Vagina (tissue), 2 donors: ENCODE measurements at regions of chr10 and their contacts with region 1.

Region 1: DNA sequence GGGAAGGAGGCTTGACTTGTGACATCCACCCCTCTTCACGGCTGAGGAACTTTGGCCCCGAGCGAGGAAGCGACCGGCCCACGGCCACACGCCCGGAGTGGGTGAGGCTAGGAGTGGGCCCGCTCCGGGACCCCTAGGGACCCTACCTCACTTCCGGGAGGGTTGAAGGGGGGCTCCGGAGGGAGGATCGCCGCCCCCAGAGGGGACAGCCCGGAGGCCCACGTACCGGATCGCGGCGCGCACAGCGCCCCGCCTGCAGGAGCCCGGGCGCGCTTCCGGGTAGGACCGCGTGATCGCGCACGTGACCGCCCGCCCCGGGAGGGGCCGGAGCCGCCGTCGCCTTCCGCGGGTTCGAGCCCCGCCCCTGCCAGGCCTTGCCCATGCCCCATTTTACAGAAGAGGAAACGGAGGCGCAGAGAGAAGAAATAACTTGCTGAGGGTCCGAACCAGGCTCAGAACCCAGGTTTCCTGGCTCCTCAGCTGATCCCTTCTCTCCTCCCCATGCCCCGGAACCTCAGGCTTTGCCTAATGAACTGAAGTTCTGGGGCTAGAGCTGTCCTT is at the start of gene HPS1:
- DNase-seq: no peak
- H3K4me3 ChIP-seq: peak within 1 kb of the TSS; percentile 62 to 65
- H3K27ac ChIP-seq: peak within 1 kb of the TSS; percentile 92
- H3K4me1 ChIP-seq: peaks cover 8% of the 10 kb centered on the region
- H3K27me3 ChIP-seq: no peaks in the 10 kb centered on the region
- CTCF ChIP-seq: no peak
- POLR2A ChIP-seq: peak in 1 of 2 donors; percentile 88
- total RNA-seq, gene HPS1: 62.1 TPM

Region 2: GRCh38 chr10:97759158-97759887 is 687.4 kb before region 1 on chr10:
- intact Hi-C with region 1: loop called (anchors 10 kb)
- DNase-seq: no peak
- H3K4me3 ChIP-seq: no peak overlapping the region
- H3K27ac ChIP-seq: no peak overlapping the region
- H3K4me1 ChIP-seq: no peaks in the 10 kb centered on the region
- H3K27me3 ChIP-seq: no peaks in the 10 kb centered on the region
- CTCF ChIP-seq: peak; percentile 32 to 54 (median 33)
- POLR2A ChIP-seq: no peak

Region 3: GRCh38 chr10:98269072-98269912 is 177.4 kb before region 1 on chr10:
- intact Hi-C with region 1: loop called (anchors 5 kb)
- DNase-seq: no peak
- H3K4me3 ChIP-seq: peak overlapping the region; percentile 49 to 56
- H3K27ac ChIP-seq: peak overlapping the region; percentile 85
- H3K4me1 ChIP-seq: peaks cover 37% of the 10 kb centered on the region
- H3K27me3 ChIP-seq: no peaks in the 10 kb centered on the region
- CTCF ChIP-seq: no peak
- POLR2A ChIP-seq: no peak

Region 4: GRCh38 chr10:98404571-98405359 is 42.0 kb before region 1 on chr10:
- intact Hi-C with region 1: no loop called
- DNase-seq: no peak
- H3K4me3 ChIP-seq: no peak overlapping the region
- H3K27ac ChIP-seq: peak overlapping the region; percentile 63
- H3K4me1 ChIP-seq: peaks cover 23% of the 10 kb centered on the region
- H3K27me3 ChIP-seq: no peaks in the 10 kb centered on the region
- CTCF ChIP-seq: no peak
- POLR2A ChIP-seq: no peak